ENCODE measurements at regions of chr16 and their contacts with region 1.

Region 1: GRCh38 chr16:11255737-11256660 is at the start of gene SOCS1:
- DNase-seq: peak; percentile 95
- total RNA-seq, gene SOCS1: 7.5 to 7.7 TPM

Region 2: DNA sequence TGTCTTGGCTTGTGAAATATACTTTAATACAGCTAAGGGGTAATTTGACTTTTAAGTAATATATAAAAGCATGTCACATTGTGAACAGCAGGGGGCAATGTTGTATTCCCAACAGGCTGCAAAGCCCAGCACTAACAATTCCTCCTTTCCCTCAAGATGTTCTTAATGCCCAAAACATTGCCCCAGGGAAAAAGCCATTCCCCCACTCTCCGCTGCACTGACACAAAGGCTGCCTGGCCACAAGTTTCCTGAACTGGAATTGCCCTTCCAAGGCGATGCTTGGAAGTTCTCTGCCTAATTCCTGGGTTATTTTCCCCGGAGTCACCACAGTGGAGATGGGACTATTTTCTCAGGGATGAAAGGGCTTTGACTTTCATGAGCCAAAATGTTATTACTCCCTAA is 284.4 kb before region 1 on chr16:
- intact Hi-C with region 1: loop called (anchors 2 kb)
- DNase-seq: no peak

Region 3: DNA sequence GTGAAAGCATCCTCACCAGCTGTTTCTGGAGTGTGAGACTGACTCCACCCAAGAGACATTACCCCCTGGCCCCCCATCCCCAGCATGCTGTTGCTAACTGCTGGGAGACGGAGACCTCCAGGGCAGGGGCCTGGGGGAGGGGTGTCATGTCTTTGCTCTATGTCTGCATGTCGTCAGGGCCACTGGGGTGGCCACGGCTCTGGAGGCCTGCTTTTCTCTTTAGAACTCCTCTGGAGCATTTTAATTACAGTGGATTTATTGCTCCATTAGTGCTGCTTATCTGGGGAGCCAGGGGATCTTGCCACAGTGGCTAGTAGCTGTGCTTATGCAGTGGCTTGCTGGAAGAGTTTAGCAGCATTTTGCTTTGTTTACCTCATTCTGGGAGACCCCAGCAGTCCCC is 279.4 kb before region 1 on chr16:
- intact Hi-C with region 1: loop called (anchors 2 kb)
- DNase-seq: no peak

Region 4: GRCh38 chr16:11105038-11105903 is 150.7 kb before region 1 on chr16:
- intact Hi-C with region 1: loop called (anchors 10 kb)
- DNase-seq: no peak

Region 5: GRCh38 chr16:11114366-11115164 is 141.4 kb before region 1 on chr16:
- intact Hi-C with region 1: loop called (anchors 10 kb)
- DNase-seq: no peak

Region 6: DNA sequence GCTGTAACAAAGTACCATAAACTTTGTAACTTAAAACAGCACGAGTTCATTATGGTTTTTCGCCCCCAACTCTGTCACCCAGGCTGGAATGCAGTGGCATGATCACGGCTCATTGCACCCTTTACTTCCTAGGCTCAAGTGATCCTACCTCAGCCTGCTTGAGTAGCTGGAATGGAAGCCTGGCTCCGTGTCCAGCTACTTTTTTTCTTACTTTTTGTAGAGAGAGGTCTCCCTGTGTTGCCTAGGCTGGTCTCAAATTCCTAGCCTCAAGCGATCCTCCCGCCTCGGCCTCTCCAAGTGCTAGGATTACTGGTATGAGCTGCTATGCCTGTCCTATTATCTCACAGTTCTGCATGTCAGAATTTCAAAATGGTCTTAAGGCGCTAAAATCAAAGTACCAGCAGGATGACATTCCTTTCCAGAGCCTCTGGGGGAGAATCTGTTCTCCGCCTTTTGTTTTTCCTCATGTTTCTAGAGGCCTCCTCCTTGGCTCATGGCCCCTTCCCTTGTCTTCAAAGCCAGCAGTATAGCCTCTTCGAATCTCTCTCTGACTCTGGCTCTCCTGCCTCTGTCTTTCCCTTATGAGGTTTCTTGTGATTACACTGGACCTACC is 35.2 kb after region 1 on chr16:
- intact Hi-C with region 1: no loop called
- DNase-seq: no peak

Measured in posterior vena cava (tissue), 2 donors.